ENCODE measurements at regions of chr3 and their contacts with region 1.

Region 1: GRCh38 chr3:128051837-128052594 is at the start of gene SEC61A1:
- DNase-seq: peak; percentile 95
- H3K4me3 ChIP-seq: peak within 1 kb of the TSS; percentile 87 to 97 (median 89)
- H3K27ac ChIP-seq: peak within 1 kb of the TSS; percentile 92
- H3K4me1 ChIP-seq: peaks cover 34% of the 10 kb centered on the region
- H3K27me3 ChIP-seq: no peaks in the 10 kb centered on the region
- CTCF ChIP-seq: no peak
- total RNA-seq, gene SEC61A1: 291 to 353 TPM

Region 2: DNA sequence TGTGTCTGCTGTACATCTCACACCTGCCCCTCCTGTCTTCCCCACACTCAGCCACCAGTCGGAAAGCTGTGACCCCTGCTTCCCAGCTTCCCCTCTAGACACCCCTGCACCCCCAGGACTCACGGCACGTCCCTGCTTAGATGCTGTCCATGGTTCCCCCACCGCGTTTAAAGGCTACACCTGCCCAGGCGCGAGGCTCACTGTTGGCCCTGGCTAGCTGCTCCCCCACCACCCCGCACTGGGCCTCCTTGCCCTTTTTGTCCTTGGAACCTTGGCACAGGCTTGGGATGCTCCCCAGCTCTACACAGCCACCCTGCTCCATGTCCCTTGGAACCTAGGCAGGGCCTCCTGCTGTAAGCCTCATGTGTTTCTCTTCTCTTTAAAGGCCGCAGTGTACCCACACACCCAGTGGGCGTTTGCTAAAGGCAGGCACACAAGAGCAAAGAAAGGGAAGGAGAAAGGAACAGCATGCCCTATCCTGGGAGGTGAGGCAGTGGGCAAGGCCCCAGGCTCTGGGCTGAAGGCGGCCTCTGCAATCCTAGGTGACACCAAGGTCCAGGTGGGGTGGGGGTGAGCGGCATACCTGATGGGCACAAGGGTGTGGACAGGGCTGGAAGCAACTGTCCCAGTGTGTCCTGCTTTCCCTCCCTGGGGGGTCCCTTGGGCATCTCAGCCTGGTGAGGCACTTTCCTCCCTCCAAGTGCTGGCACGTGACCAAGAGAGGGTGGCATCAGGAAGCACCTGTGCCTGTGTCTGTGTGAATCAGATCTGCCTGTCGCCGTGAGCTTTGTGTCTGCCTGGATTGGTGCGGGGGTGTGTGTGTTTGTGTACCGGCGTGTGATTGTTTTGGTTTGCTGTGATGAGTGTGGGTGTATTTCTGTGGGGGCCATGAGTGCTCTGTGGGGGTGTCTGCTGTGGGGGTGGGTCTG is 515.9 kb before region 1 on chr3:
- CTCF ChIA-PET with region 1: no interaction called
- dilution Hi-C with region 1: no loop called
- in situ Hi-C with region 1: no loop called
- intact Hi-C with region 1: no loop called
- DNase-seq: no peak
- H3K4me3 ChIP-seq: no peak overlapping the region
- H3K27ac ChIP-seq: no peak overlapping the region
- H3K4me1 ChIP-seq: no peaks in the 10 kb centered on the region
- H3K27me3 ChIP-seq: no peaks in the 10 kb centered on the region
- CTCF ChIP-seq: no peak

Region 3: GRCh38 chr3:127735767-127736704 is 316.0 kb before region 1 on chr3:
- CTCF ChIA-PET with region 1: no interaction called
- dilution Hi-C with region 1: no loop called
- in situ Hi-C with region 1: no loop called
- intact Hi-C with region 1: loop called (anchors 5 kb)
- DNase-seq: peak; percentile 44
- H3K4me3 ChIP-seq: no peak overlapping the region
- H3K27ac ChIP-seq: peak overlapping the region; percentile 74
- H3K4me1 ChIP-seq: peaks cover 36% of the 10 kb centered on the region
- H3K27me3 ChIP-seq: no peaks in the 10 kb centered on the region
- CTCF ChIP-seq: no peak

Region 4: DNA sequence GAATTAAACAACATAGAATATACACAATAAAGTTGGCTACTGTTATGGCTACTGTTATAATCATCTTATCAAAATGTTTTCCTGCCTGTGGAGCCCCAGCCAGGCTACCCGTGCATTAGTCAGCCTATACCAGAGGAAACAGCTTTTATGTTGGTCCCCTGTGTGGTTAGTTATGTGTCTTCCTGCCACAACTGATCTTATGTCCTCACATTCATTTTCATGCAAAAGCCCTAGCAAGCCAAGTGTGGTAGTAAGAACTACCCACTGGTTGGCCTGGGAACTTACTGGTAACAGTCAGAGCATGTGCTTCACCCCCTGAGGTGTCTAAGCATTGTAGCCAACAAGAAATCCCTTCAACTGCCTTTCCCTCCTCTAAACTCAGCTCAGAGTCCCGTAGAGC is 251.5 kb before region 1 on chr3:
- CTCF ChIA-PET with region 1: no interaction called
- dilution Hi-C with region 1: no loop called
- in situ Hi-C with region 1: no loop called
- intact Hi-C with region 1: loop called (anchors 5 kb)
- DNase-seq: peak; percentile 38
- H3K4me3 ChIP-seq: no peak overlapping the region
- H3K27ac ChIP-seq: peak overlapping the region; percentile 93
- H3K4me1 ChIP-seq: peaks cover 38% of the 10 kb centered on the region
- H3K27me3 ChIP-seq: no peaks in the 10 kb centered on the region
- CTCF ChIP-seq: no peak

Region 5: DNA sequence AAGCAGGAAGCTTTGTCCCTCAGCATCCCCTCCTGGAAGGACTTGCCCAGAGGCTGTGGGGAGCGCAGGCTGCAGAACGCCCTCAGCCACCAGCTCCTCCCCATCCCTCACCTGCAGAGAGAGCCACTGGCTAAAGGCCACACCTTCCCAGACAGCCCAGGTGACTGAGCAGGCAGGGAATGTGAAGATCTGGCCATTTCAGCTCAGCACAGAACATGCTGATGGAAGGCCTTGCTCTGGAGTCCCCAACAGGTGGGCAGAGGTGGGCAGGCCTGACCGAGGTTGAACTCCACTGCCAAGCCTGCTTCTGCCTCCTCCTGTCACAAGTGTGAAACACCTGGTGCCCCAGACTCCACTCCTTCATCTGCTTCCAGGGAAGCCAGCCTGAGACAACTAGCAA is 50.4 kb before region 1 on chr3:
- CTCF ChIA-PET with region 1: no interaction called
- dilution Hi-C with region 1: loop called (anchors 5 kb)
- in situ Hi-C with region 1: no loop called
- intact Hi-C with region 1: no loop called
- DNase-seq: no peak
- H3K4me3 ChIP-seq: no peak overlapping the region
- H3K27ac ChIP-seq: no peak overlapping the region
- H3K4me1 ChIP-seq: peaks cover 1% of the 10 kb centered on the region
- H3K27me3 ChIP-seq: no peaks in the 10 kb centered on the region
- CTCF ChIP-seq: no peak

Region 6: GRCh38 chr3:128011140-128011539 is 40.9 kb before region 1 on chr3:
- CTCF ChIA-PET with region 1: interaction called, 8 read pairs
- dilution Hi-C with region 1: no loop called
- in situ Hi-C with region 1: no loop called
- intact Hi-C with region 1: loop called (anchors 1 kb)
- DNase-seq: peak; percentile 46
- H3K4me3 ChIP-seq: no peak overlapping the region
- H3K27ac ChIP-seq: no peak overlapping the region
- H3K4me1 ChIP-seq: peaks cover 13% of the 10 kb centered on the region
- H3K27me3 ChIP-seq: no peaks in the 10 kb centered on the region
- CTCF ChIP-seq: peak; percentile 29 to 68